ENCODE measurements at regions of chr18 and their contacts with region 1.

Region 1: DNA sequence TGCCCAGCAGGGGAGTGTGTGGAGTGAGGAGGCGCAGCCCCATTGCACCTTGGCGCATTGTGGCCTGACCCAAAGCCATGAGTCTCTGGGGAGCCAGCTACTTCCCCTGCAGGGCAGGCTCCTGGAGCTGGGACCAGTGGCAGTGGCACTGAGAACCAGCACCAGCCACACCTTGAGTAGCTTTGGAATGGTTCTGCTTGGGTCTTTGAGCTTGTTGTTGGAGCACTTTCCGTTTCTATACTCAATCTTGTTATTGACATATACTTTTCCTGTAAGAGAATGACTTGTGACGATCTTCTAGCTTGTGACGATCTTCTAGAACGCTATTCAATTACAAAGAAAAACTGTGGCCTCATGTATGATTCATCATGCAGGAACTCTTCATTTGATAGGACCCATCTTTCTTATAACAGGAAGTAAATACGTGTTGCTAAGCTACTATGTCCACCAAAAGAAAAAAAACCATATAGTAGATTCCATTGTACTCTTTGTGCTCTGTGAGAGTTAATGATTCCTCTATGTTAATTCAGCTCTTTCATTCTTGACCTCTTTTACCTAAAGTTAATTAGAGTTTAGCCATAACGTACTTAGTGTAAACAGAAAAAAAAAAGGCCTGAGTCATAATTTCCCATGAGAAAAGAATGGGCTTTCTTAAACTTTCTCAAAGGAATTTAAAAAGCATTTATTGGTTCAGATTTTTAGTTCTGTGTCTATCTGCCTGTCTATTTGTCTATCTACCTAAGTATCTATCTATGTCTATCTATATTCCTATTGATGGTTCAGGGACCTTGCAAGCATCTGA is 113.1 kb downstream of the GATA6 start:
- DNase-seq: peak; percentile 69
- H3K4me3 ChIP-seq: no peak overlapping the region
- H3K27ac ChIP-seq: peak overlapping the region; percentile 50
- H3K4me1 ChIP-seq: peaks cover 29% of the 10 kb centered on the region
- H3K27me3 ChIP-seq: no peaks in the 10 kb centered on the region

Region 2: GRCh38 chr18:21980744-21981143 is 301.8 kb before region 1 on chr18:
- in situ Hi-C with region 1: no loop called
- DNase-seq: no peak
- H3K4me3 ChIP-seq: no peak overlapping the region
- H3K27ac ChIP-seq: no peak overlapping the region
- H3K4me1 ChIP-seq: no peaks in the 10 kb centered on the region
- H3K27me3 ChIP-seq: peaks cover 10% of the 10 kb centered on the region; the same call in 1 of the 2 replicates

Region 3: DNA sequence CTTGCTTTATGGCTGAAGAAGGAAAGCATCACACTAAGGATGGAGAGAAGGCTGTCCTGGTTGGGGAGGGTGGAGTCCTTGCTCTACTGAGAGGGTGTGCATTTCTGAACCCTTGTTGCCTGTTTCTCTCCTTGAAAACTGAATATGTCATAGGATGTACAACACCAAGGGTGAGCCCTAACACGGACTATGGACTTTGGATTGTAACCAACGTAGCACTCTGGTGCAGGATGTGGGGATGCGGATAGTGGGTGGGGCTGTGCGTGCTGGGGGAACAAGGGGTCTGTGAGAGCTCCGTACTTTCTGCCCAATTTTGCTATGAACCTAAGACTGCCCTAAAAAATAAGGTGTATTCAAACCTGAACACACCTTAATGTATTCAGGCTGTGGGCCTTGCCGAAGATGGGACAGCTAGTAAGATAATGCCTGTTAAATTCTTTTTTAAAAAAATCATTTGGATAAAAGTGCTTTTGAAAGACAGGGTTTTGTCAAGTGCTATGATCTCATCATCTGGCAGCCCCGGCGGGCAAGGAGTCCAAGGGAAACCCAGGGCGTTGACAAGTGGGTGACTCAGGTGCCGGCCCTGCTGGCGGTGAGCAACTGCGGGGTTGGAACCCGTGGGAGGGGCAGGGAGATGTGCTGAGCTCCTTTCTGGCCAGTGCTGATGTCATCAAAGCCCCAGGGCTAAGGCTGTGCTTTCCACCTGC is 59.1 kb before region 1 on chr18:
- in situ Hi-C with region 1: loop called (anchors 10 kb)
- DNase-seq: peak; percentile 99
- H3K4me3 ChIP-seq: no peak overlapping the region
- H3K27ac ChIP-seq: no peak overlapping the region
- H3K4me1 ChIP-seq: peaks cover 9% of the 10 kb centered on the region
- H3K27me3 ChIP-seq: no peaks in the 10 kb centered on the region

Region 4: GRCh38 chr18:22241921-22242361 is 40.6 kb before region 1 on chr18:
- in situ Hi-C with region 1: loop called (anchors 5 kb)
- DNase-seq: no peak
- H3K4me3 ChIP-seq: no peak overlapping the region
- H3K27ac ChIP-seq: no peak overlapping the region
- H3K4me1 ChIP-seq: no peaks in the 10 kb centered on the region
- H3K27me3 ChIP-seq: peaks cover 59% of the 10 kb centered on the region

Region 5: GRCh38 chr18:22465859-22466457 is 183.4 kb after region 1 on chr18:
- in situ Hi-C with region 1: no loop called
- DNase-seq: peak; percentile 99
- H3K4me3 ChIP-seq: peak overlapping the region; percentile 52
- H3K27ac ChIP-seq: peak overlapping the region; percentile 94
- H3K4me1 ChIP-seq: peaks cover 28% of the 10 kb centered on the region
- H3K27me3 ChIP-seq: no peaks in the 10 kb centered on the region

Region 6: GRCh38 chr18:22933206-22933957 is 650.9 kb after region 1 on chr18 and contains the start of gene RBBP8:
- in situ Hi-C with region 1: no loop called
- DNase-seq: peak; percentile 92
- H3K4me3 ChIP-seq: peak within 1 kb of the TSS; percentile 94
- H3K27ac ChIP-seq: peak within 1 kb of the TSS; percentile 87
- H3K4me1 ChIP-seq: 0 out of 2 replicates have a peak, but pooled peaks cover 3% of the 10 kb centered on the region
- H3K27me3 ChIP-seq: no peaks in the 10 kb centered on the region
- total RNA-seq, gene RBBP8: 34.9 and 45.2 TPM in 2 replicates

Measured in GM23248 (cell line).